ENCODE measurements at regions of chr7 and their contacts with region 1.

Region 1: DNA sequence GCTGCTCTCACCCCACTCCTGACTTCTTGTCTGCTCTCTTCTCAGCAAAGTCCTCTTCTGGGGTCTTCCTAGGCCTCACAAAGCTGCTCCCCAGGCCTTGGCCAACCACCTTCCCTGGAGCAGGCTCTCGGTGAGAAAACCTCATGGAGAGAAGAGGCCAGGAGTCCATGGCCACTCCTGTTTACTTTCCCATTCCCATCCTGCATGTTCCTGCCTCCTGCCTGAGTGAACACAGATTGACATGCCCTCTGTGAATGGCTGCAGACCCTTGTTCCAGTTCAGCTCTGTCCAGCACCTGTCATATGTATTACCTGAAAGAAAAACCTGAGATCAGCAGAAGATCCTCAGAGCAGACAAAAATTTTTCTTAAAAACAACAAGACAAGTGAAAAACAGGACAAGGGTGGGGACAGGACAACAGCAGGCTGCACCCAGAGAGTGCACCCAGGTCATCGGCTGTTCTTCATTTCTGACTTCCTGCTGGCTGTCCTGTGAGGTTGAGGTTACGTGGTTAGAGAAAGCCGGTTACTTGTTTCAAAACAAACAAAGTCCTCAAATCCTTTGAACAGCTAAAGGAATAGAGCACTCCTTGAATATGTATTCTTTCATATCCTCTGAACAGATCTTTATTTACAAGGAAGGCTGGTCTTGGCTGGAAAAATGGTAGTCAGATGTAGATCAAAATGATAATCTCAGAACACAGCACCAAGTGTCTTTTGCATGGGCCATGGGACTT is 34.0 kb upstream of the DLD start:
- DNase-seq: no peak
- H3K4me3 ChIP-seq: no peak overlapping the region
- H3K27ac ChIP-seq: no peak overlapping the region
- H3K4me1 ChIP-seq: no peaks in the 10 kb centered on the region
- H3K27me3 ChIP-seq: peaks cover 7% of the 10 kb centered on the region
- CTCF ChIP-seq: no peak

Region 2: GRCh38 chr7:107103363-107103762 is 753.6 kb before region 1 on chr7:
- CTCF ChIA-PET with region 1: interaction called, 12 read pairs
- POLR2A ChIA-PET with region 1: no interaction called
- intact Hi-C with region 1: no loop called
- DNase-seq: no peak
- H3K4me3 ChIP-seq: no peak overlapping the region
- H3K27ac ChIP-seq: no peak overlapping the region
- H3K4me1 ChIP-seq: no peaks in the 10 kb centered on the region
- H3K27me3 ChIP-seq: no peaks in the 10 kb centered on the region
- CTCF ChIP-seq: no peak